ENCODE measurements at regions of chr1 and their contacts with region 1.

Region 1: GRCh38 chr1:90964444-90965035 is 57.3 kb downstream of the ZNF644 start:
- DNase-seq: peak in 3 of 14 experiments; percentile 20 to 30 (median 24)
- ATAC-seq: peak; percentile 37
- H3K4me3 ChIP-seq: no peak overlapping the region
- H3K4me3 Mint-ChIP-seq: no peak overlapping the region
- H3K27ac ChIP-seq: no peak overlapping the region
- H3K27ac Mint-ChIP-seq: no peak overlapping the region
- H3K4me1 ChIP-seq: no peaks in the 10 kb centered on the region
- H3K4me1 Mint-ChIP-seq: peaks cover 68% of the 10 kb centered on the region
- H3K27me3 ChIP-seq: no peaks in the 10 kb centered on the region
- H3K27me3 Mint-ChIP-seq: no peaks in the 10 kb centered on the region
- CTCF ChIP-seq: peak; percentile 66

Region 2: GRCh38 chr1:90579212-90579802 is 385.2 kb before region 1 on chr1:
- CTCF ChIA-PET with region 1: no interaction called
- POLR2A ChIA-PET with region 1: no interaction called
- intact Hi-C with region 1: loop called (anchors 1 to 2 kb)
- DNase-seq: peak in 3 of 14 experiments; percentile 43 to 49 (median 49)
- ATAC-seq: no peak
- H3K4me3 ChIP-seq: no peak overlapping the region
- H3K4me3 Mint-ChIP-seq: no peak overlapping the region
- H3K27ac ChIP-seq: no peak overlapping the region
- H3K27ac Mint-ChIP-seq: no peak overlapping the region
- H3K4me1 ChIP-seq: no peaks in the 10 kb centered on the region
- H3K4me1 Mint-ChIP-seq: no peaks in the 10 kb centered on the region
- H3K27me3 ChIP-seq: peaks cover 0 to 4% of the 10 kb centered on the region in 2 experiments
- H3K27me3 Mint-ChIP-seq: peaks cover 8% of the 10 kb centered on the region
- CTCF ChIP-seq: peak; percentile 71

Region 3: GRCh38 chr1:90902672-90903071 is 61.9 kb before region 1 on chr1:
- CTCF ChIA-PET with region 1: no interaction called
- POLR2A ChIA-PET with region 1: no interaction called
- intact Hi-C with region 1: no loop called
- DNase-seq: no peak
- ATAC-seq: no peak
- H3K4me3 ChIP-seq: no peak overlapping the region
- H3K4me3 Mint-ChIP-seq: no peak overlapping the region
- H3K27ac ChIP-seq: no peak overlapping the region
- H3K27ac Mint-ChIP-seq: no peak overlapping the region
- H3K4me1 ChIP-seq: no peaks in the 10 kb centered on the region
- H3K4me1 Mint-ChIP-seq: peaks cover 8% of the 10 kb centered on the region
- H3K27me3 ChIP-seq: no peaks in the 10 kb centered on the region
- H3K27me3 Mint-ChIP-seq: no peaks in the 10 kb centered on the region
- CTCF ChIP-seq: no peak

Measured in CD4-positive, alpha-beta T cell (primary cell).